OCI-LY7 (cell line): ENCODE measurements at regions of chr5 and their contacts with region 1.

Region 1: GRCh38 chr5:117769877-117770276 is 1195.3 kb upstream of the SEMA6A start:
- DNase-seq: no peak
- H3K4me3 ChIP-seq: no peak overlapping the region
- H3K27ac ChIP-seq: no peak overlapping the region
- H3K4me1 ChIP-seq: no peaks in the 10 kb centered on the region
- CTCF ChIP-seq: no peak

Region 2: DNA sequence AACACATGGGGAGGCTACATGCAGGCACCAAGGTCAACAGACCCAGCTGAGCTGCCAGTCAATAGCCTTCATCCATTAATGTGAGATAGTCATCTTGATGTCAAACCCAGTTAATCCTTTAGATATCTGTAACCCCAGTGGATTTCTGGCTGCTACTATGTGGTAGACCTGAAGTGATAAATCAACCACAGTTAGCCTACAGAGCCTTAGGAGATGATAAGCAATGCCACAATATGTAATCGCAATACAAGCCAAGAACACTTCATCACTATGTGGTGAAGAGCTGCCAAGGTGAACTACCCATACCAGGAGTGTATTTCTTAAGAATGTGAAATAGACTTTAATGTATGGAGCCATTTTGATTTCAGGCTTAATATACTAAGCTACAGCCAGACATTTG is 43.0 kb after region 1 on chr5:
- CTCF ChIA-PET with region 1: no interaction called
- POLR2A ChIA-PET with region 1: no interaction called
- intact Hi-C with region 1: loop called (anchors 1 kb)
- DNase-seq: no peak
- H3K4me3 ChIP-seq: no peak overlapping the region
- H3K27ac ChIP-seq: no peak overlapping the region
- H3K4me1 ChIP-seq: no peaks in the 10 kb centered on the region
- CTCF ChIP-seq: no peak